ENCODE measurements at regions of chr18 and their contacts with region 1.

Region 1: GRCh38 chr18:21167630-21168377 is 56.2 kb upstream of the ROCK1 start:
- H3K4me3 ChIP-seq: no peak overlapping the region
- H3K27ac ChIP-seq: no peak overlapping the region
- H3K4me1 ChIP-seq: no peaks in the 10 kb centered on the region
- CTCF ChIP-seq: no peak

Region 2: GRCh38 chr18:21179590-21180220 is 11.9 kb after region 1 on chr18:
- CTCF ChIA-PET with region 1: interaction called, 22 read pairs
- POLR2A ChIA-PET with region 1: no interaction called
- H3K4me3 ChIP-seq: no peak overlapping the region
- H3K27ac ChIP-seq: no peak overlapping the region
- H3K4me1 ChIP-seq: no peaks in the 10 kb centered on the region
- CTCF ChIP-seq: peak; percentile 68

Region 3: GRCh38 chr18:21242141-21242779 is 74.5 kb after region 1 on chr18 and contains the start of gene GREB1L:
- CTCF ChIA-PET with region 1: no interaction called
- POLR2A ChIA-PET with region 1: no interaction called
- H3K4me3 ChIP-seq: peak within 1 kb of the TSS; percentile 64
- H3K27ac ChIP-seq: peak within 1 kb of the TSS; percentile 95
- H3K4me1 ChIP-seq: peaks cover 16% of the 10 kb centered on the region
- CTCF ChIP-seq: peak; percentile 30; the same call in 1 of the 2 replicates

Region 4: DNA sequence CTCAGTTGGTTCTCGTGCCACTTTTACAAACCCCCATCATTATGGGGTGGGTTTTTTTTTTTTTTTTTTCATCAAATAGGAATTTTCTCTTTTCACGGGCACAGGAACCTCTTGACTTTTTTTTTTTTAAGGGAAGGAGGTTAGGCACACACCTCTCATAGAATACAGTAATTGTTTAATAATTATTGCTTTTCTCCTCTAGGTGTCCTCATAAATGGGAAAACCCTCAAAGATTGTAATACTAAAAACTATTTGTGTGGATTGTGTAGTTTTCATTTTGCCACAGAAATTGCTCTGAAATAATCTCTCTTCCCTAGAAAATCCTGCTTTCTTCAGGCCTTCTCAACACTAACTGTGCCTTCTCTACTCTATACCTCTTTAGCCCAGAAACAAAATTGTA is 221.5 kb after region 1 on chr18:
- CTCF ChIA-PET with region 1: no interaction called
- POLR2A ChIA-PET with region 1: no interaction called
- H3K4me3 ChIP-seq: no peak overlapping the region
- H3K27ac ChIP-seq: no peak overlapping the region
- H3K4me1 ChIP-seq: peaks cover 6% of the 10 kb centered on the region; the same call in 1 of the 2 replicates
- CTCF ChIP-seq: no peak

Region 5: GRCh38 chr18:21509062-21509461 is 341.3 kb after region 1 on chr18:
- CTCF ChIA-PET with region 1: interaction called, 12 read pairs
- POLR2A ChIA-PET with region 1: no interaction called
- H3K4me3 ChIP-seq: no peak overlapping the region
- H3K27ac ChIP-seq: no peak overlapping the region
- H3K4me1 ChIP-seq: no peaks in the 10 kb centered on the region
- CTCF ChIP-seq: peak; percentile 50; the same call in 1 of the 2 replicates

Measured in HEK293 (cell line).